Activated CD4-positive, alpha-beta T cell treated with anti-CD3 and anti-CD28 coated beads for 36 hours (primary cell): ENCODE measurements at regions of chr4 and their contacts with region 1.

Region 1: DNA sequence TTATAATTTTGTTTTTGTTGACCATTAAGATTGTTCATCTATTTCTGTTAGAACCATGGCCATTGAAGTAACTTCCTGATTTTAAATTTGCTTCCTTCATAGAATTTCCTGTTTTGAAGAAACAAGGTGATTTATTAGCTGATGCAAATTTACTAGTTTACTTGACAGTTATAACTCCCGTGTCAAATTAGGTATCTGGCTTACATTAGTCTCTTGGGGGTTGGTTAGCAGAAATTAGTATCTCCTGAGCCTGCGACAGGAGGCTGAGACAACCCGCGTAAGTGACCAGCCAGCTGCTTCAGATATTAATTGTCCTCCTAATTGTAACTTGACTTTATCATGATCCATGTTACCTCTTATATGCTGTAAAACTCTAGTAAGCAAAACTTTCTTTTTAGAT is 154.3 kb downstream of the CFAP299 start:
- DNase-seq: no peak
- ATAC-seq: no peak
- H3K4me3 Mint-ChIP-seq: no peak overlapping the region
- H3K27ac Mint-ChIP-seq: no peak overlapping the region
- H3K4me1 Mint-ChIP-seq: peaks cover 43% of the 10 kb centered on the region
- H3K27me3 Mint-ChIP-seq: no peaks in the 10 kb centered on the region

Region 2: GRCh38 chr4:80500613-80501012 is 10.8 kb after region 1 on chr4:
- CTCF ChIA-PET with region 1: interaction called, 10 read pairs
- POLR2A ChIA-PET with region 1: no interaction called
- intact Hi-C with region 1: no loop called
- DNase-seq: peak; percentile 12
- ATAC-seq: peak; percentile 75
- H3K4me3 Mint-ChIP-seq: no peak overlapping the region
- H3K27ac Mint-ChIP-seq: peak overlapping the region; percentile 63
- H3K4me1 Mint-ChIP-seq: peaks cover 39% of the 10 kb centered on the region
- H3K27me3 Mint-ChIP-seq: no peaks in the 10 kb centered on the region